HepG2 (cell line): ENCODE measurements at regions of chr16 and their contacts with region 1.

Region 1: GRCh38 chr16:71808593-71809459 is at the start of gene AP1G1:
- DNase-seq: peak; percentile 98
- ATAC-seq: peak; percentile 94
- H3K4me3 ChIP-seq: peak within 1 kb of the TSS; percentile 96 to 99 (median 98)
- H3K27ac ChIP-seq: peak within 1 kb of the TSS; percentile 98
- H3K4me1 ChIP-seq: peaks cover 48% of the 10 kb centered on the region
- H3K27me3 ChIP-seq: peaks cover 0 to 6% of the 10 kb centered on the region in 2 experiments; a peak in 1 of 5 replicates
- CTCF ChIP-seq: peak; percentile 10; the same call in 1 of the 2 replicates
- EP300 ChIP-seq: peak in 1 of 2 experiments; percentile 31; a peak in 3 of 4 replicates
- POLR2A ChIP-seq: peak; percentile 87 to 88
- RAD21 ChIP-seq: peak; percentile 54; the same call in 1 of the 2 replicates
- total RNA-seq, gene AP1G1: 66.2 and 87.1 TPM in 2 replicates

Region 2: GRCh38 chr16:71788578-71788977 is 20.2 kb before region 1 on chr16:
- CTCF ChIA-PET with region 1: no interaction called
- POLR2A ChIA-PET with region 1: interaction called, 15 read pairs
- in situ Hi-C with region 1: no loop called
- intact Hi-C with region 1: no loop called
- DNase-seq: no peak
- ATAC-seq: no peak
- H3K4me3 ChIP-seq: no peak overlapping the region
- H3K27ac ChIP-seq: no peak overlapping the region
- H3K4me1 ChIP-seq: peaks cover 7% of the 10 kb centered on the region; the same call in 1 of the 2 replicates
- H3K27me3 ChIP-seq: no peaks in the 10 kb centered on the region
- CTCF ChIP-seq: no peak
- EP300 ChIP-seq: no peak
- POLR2A ChIP-seq: no peak
- RAD21 ChIP-seq: no peak

Region 3: DNA sequence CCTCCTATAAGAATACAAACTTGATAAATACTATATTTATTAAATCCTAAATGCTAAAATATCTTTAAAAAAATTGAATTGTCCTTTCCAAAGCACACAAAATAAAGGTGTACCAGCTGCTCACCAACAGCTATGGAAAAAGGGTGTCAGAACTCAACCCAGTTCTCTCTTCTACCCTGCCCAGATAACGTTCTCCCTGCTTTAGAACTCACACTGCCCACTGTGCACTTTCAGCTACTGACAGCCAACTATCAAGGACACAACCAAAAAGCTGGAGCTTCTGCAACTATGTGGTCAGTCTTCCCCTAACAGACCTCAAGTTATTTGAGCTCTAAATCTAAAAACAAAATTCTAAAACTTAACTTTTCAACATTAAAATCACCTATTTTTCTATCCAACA is 13.9 kb before region 1 on chr16:
- CTCF ChIA-PET with region 1: no interaction called
- POLR2A ChIA-PET with region 1: interaction called, 15 read pairs
- in situ Hi-C with region 1: no loop called
- intact Hi-C with region 1: no loop called
- DNase-seq: no peak
- ATAC-seq: peak; percentile 60
- H3K4me3 ChIP-seq: no peak overlapping the region
- H3K27ac ChIP-seq: no peak overlapping the region
- H3K4me1 ChIP-seq: peaks cover 22% of the 10 kb centered on the region; the same call in 1 of the 2 replicates
- H3K27me3 ChIP-seq: no peaks in the 10 kb centered on the region
- CTCF ChIP-seq: no peak
- EP300 ChIP-seq: no peak
- POLR2A ChIP-seq: no peak
- RAD21 ChIP-seq: no peak

Region 4: GRCh38 chr16:71845639-71846430 is 37.0 kb after region 1 on chr16 and contains the start of gene ATXN1L:
- CTCF ChIA-PET with region 1: no interaction called
- POLR2A ChIA-PET with region 1: interaction called, 7 read pairs
- in situ Hi-C with region 1: no loop called
- intact Hi-C with region 1: loop called (anchors 5 kb)
- DNase-seq: peak; percentile 89
- ATAC-seq: peak; percentile 93
- H3K4me3 ChIP-seq: peak within 1 kb of the TSS; percentile 78 to 99 (median 97)
- H3K27ac ChIP-seq: peak within 1 kb of the TSS; percentile 65
- H3K4me1 ChIP-seq: peaks cover 30% of the 10 kb centered on the region
- H3K27me3 ChIP-seq: no peaks in the 10 kb centered on the region; a peak in 1 of 5 replicates
- CTCF ChIP-seq: peak; percentile 19; the same call in 1 of the 2 replicates
- EP300 ChIP-seq: peak; percentile 41 to 87; a peak in 3 of 4 replicates
- POLR2A ChIP-seq: peak; percentile 86 to 99
- RAD21 ChIP-seq: 0 out of 2 replicates have a peak, but pooled peaks have one; percentile 41
- total RNA-seq, gene ATXN1L: 22.4 and 23.6 TPM in 2 replicates

Region 5: GRCh38 chr16:71883849-71884638 is 75.2 kb after region 1 on chr16 and contains the start of gene ZNF821:
- CTCF ChIA-PET with region 1: no interaction called
- POLR2A ChIA-PET with region 1: interaction called, 14 read pairs
- in situ Hi-C with region 1: no loop called
- intact Hi-C with region 1: loop called (anchors 2 kb)
- DNase-seq: peak; percentile 66
- ATAC-seq: peak; percentile 85
- H3K4me3 ChIP-seq: peak within 1 kb of the TSS; percentile 77 to 99 (median 95)
- H3K27ac ChIP-seq: peak within 1 kb of the TSS; percentile 73
- H3K4me1 ChIP-seq: peaks cover 28% of the 10 kb centered on the region
- H3K27me3 ChIP-seq: no peaks in the 10 kb centered on the region
- CTCF ChIP-seq: peak; percentile 62
- EP300 ChIP-seq: no peak
- POLR2A ChIP-seq: peak in 1 of 2 experiments; percentile 56; a peak in 3 of 4 replicates
- RAD21 ChIP-seq: peak; percentile 90
- total RNA-seq, gene ZNF821: 6.0 and 7.0 TPM in 2 replicates

Region 6: GRCh38 chr16:71894921-71895678 is 86.3 kb after region 1 on chr16 and contains the start of gene IST1:
- CTCF ChIA-PET with region 1: no interaction called
- POLR2A ChIA-PET with region 1: interaction called, 21 read pairs
- in situ Hi-C with region 1: loop called (anchors 5 kb)
- intact Hi-C with region 1: loop called (anchors 5 kb)
- DNase-seq: peak; percentile 96
- ATAC-seq: peak; percentile 91
- H3K4me3 ChIP-seq: peak within 1 kb of the TSS; percentile 85 to 98 (median 95)
- H3K27ac ChIP-seq: peak within 1 kb of the TSS; percentile 95
- H3K4me1 ChIP-seq: peaks cover 57% of the 10 kb centered on the region
- H3K27me3 ChIP-seq: no peaks in the 10 kb centered on the region; a peak in 1 of 5 replicates
- CTCF ChIP-seq: peak; percentile 23; the same call in 1 of the 2 replicates
- EP300 ChIP-seq: peak; percentile 27 to 54; a peak in 3 of 4 replicates
- POLR2A ChIP-seq: peak; percentile 94 to 95
- RAD21 ChIP-seq: peak; percentile 59
- total RNA-seq, gene IST1: 346 and 497 TPM in 2 replicates

Region 7: DNA sequence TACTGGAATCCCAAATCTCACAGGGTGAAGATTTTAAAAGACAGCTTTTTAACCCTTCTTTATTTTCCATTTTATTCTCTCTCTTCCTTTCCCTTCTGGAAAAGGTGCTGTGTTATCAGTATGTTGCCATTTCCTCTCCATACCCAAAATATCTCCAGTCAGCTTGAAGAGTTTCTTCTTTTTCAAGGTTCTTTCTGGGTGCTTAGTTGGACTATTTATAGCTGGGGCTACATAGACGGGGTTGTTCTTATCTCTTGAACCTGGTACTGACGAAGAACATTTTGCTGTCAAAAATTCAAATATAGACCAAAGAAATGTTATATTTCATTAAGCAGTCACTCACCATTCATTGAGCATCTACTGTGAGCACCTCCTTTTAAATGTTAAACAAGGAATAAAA is 135.1 kb after region 1 on chr16:
- CTCF ChIA-PET with region 1: no interaction called
- POLR2A ChIA-PET with region 1: no interaction called
- in situ Hi-C with region 1: no loop called
- intact Hi-C with region 1: no loop called
- DNase-seq: no peak
- ATAC-seq: no peak
- H3K4me3 ChIP-seq: no peak overlapping the region
- H3K27ac ChIP-seq: no peak overlapping the region
- H3K4me1 ChIP-seq: peaks cover 12% of the 10 kb centered on the region; the same call in 1 of the 2 replicates
- H3K27me3 ChIP-seq: no peaks in the 10 kb centered on the region
- CTCF ChIP-seq: no peak
- EP300 ChIP-seq: no peak
- POLR2A ChIP-seq: no peak
- RAD21 ChIP-seq: no peak

Region 8: DNA sequence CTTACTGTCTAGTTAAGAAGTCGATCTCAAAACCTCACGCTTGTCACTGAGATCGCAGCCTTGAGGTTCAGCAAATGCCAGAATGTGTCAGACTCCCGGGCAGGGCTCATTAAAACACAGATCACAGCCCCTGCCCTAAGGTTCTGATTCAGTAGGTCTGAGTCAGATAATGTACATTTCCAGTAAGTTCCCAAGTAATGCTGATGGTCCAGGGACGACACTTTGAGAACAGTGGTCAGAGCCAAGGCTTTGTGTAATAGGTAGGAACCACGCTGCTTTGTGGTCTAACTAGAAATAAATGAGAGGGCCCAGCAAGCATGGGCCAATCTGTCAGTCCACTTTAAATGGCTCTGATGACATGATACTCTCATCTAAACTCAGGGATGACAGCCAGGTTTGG is 1010.5 kb after region 1 on chr16:
- CTCF ChIA-PET with region 1: no interaction called
- POLR2A ChIA-PET with region 1: no interaction called
- in situ Hi-C with region 1: no loop called
- intact Hi-C with region 1: no loop called
- DNase-seq: no peak
- ATAC-seq: no peak
- H3K4me3 ChIP-seq: no peak overlapping the region
- H3K27ac ChIP-seq: no peak overlapping the region
- H3K4me1 ChIP-seq: no peaks in the 10 kb centered on the region
- H3K27me3 ChIP-seq: no peaks in the 10 kb centered on the region
- CTCF ChIP-seq: no peak
- EP300 ChIP-seq: no peak
- POLR2A ChIP-seq: no peak
- RAD21 ChIP-seq: no peak